ENCODE measurements at regions of chr12 and their contacts with region 1.

Region 1: GRCh38 chr12:10140001-10140400 is 10.0 kb upstream of the CLEC7A start:
- DNase-seq: peak; percentile 72
- H3K4me3 Mint-ChIP-seq: no peak overlapping the region
- H3K27ac Mint-ChIP-seq: no peak overlapping the region
- H3K4me1 Mint-ChIP-seq: no peaks in the 10 kb centered on the region
- H3K27me3 Mint-ChIP-seq: no peaks in the 10 kb centered on the region
- CTCF ChIP-seq: peak; percentile 69

Region 2: DNA sequence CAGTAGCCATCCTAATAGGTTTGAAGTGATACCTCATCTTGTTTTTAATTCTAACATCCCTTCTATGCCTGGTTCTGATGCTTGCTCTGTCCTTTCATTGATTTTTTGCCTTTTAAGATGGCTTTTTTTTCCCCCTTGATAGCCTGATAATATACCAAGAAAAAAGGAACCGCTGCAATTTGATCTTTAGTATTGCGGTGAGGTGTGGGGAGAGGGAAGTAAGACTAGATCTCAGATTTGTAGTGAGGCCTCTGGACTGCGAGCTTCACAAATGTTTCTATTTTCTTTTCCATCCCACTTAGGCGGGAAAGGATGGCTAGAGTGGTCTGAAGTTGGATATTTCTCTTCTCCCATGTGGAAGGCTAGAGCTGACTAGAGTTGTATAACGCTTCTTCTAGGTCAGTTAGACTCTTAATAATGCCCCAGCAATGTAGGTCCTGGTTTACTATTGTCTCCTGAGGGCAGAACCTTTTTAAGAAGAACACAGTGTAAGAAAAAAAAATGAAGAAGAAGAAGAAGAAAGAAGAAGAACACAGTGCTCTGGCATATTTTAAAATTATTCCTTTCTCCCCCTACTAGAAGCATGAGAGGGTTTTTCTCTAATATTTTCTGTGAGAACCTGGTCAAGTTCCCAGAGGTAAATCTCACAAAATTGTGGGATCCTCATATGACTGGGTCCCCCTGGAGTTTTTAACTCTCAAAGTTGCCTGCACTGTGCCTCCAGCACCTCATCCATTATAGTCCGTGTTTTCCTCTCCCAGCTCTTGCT is 520.4 kb before region 1 on chr12:
- CTCF ChIA-PET with region 1: no interaction called
- POLR2A ChIA-PET with region 1: no interaction called
- intact Hi-C with region 1: no loop called
- DNase-seq: no peak
- H3K4me3 Mint-ChIP-seq: no peak overlapping the region
- H3K27ac Mint-ChIP-seq: no peak overlapping the region
- H3K4me1 Mint-ChIP-seq: no peaks in the 10 kb centered on the region
- H3K27me3 Mint-ChIP-seq: no peaks in the 10 kb centered on the region
- CTCF ChIP-seq: no peak

Region 3: DNA sequence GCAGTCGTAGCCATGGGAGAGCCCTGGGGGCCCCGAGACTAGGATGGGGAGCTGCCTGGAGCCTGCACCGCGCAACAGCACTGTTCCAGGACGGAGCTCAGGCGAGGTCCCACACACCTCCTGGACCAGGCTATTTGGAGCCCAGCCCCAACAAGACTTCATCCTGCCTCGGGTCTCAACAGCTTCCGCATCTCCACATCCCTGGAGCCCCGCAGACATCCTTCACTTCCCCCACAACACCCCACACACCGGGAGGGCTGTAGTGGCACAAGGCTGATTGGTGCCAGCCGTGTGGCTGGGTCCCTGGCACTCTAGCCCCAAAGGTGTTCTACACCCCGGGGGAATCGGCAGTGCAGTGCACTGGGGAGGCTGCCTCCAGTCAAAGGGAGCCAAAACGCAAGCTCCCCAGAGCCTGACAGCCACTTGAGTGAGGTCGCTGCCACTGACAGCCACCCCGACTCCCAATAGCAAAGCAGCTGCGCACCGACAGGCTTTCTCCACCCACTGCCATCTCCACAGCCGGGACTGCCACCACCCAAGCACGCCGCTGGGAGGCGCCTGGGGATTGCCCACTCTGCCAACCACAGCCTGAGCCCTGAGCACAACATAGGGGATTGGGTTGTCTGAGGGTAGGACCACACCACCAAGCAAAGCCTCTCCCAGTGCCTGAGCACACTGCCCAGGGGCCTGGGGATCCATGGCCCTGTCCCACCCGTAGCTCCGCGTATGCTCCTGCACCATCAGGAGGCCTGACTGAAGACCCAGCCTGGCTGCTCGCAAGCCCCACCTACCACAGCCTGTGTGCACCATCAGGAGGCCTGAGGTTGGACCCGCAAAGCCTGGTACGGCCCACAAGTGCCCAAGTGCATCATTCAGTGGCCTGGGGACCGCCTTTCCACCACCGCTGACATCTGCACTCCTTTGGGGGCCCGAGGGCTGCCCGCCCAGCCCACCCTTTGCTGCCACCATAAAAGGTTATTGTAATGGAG is 325.9 kb before region 1 on chr12:
- CTCF ChIA-PET with region 1: interaction called, 7 read pairs
- POLR2A ChIA-PET with region 1: no interaction called
- intact Hi-C with region 1: loop called (anchors 1 kb)
- DNase-seq: peak; percentile 69
- H3K4me3 Mint-ChIP-seq: peak overlapping the region; percentile 57
- H3K27ac Mint-ChIP-seq: no peak overlapping the region
- H3K4me1 Mint-ChIP-seq: no peaks in the 10 kb centered on the region
- H3K27me3 Mint-ChIP-seq: no peaks in the 10 kb centered on the region
- CTCF ChIP-seq: peak; percentile 86

Region 4: GRCh38 chr12:10016881-10017280 is 123.1 kb before region 1 on chr12:
- CTCF ChIA-PET with region 1: interaction called, 74 read pairs
- POLR2A ChIA-PET with region 1: no interaction called
- intact Hi-C with region 1: no loop called
- DNase-seq: peak; percentile 37
- H3K4me3 Mint-ChIP-seq: no peak overlapping the region
- H3K27ac Mint-ChIP-seq: peak overlapping the region; percentile 2
- H3K4me1 Mint-ChIP-seq: peaks cover 8% of the 10 kb centered on the region
- H3K27me3 Mint-ChIP-seq: no peaks in the 10 kb centered on the region
- CTCF ChIP-seq: no peak

Region 5: GRCh38 chr12:10042167-10042566 is 97.8 kb before region 1 on chr12:
- CTCF ChIA-PET with region 1: interaction called, 134 read pairs
- POLR2A ChIA-PET with region 1: no interaction called
- intact Hi-C with region 1: no loop called
- DNase-seq: no peak
- H3K4me3 Mint-ChIP-seq: no peak overlapping the region
- H3K27ac Mint-ChIP-seq: no peak overlapping the region
- H3K4me1 Mint-ChIP-seq: no peaks in the 10 kb centered on the region
- H3K27me3 Mint-ChIP-seq: no peaks in the 10 kb centered on the region
- CTCF ChIP-seq: no peak

Region 6: GRCh38 chr12:10088031-10088430 is 52.0 kb before region 1 on chr12:
- CTCF ChIA-PET with region 1: no interaction called
- POLR2A ChIA-PET with region 1: no interaction called
- intact Hi-C with region 1: no loop called
- DNase-seq: no peak
- H3K4me3 Mint-ChIP-seq: no peak overlapping the region
- H3K27ac Mint-ChIP-seq: no peak overlapping the region
- H3K4me1 Mint-ChIP-seq: no peaks in the 10 kb centered on the region
- H3K27me3 Mint-ChIP-seq: no peaks in the 10 kb centered on the region
- CTCF ChIP-seq: no peak

Region 7: GRCh38 chr12:10190558-10191388 is 50.8 kb after region 1 on chr12:
- CTCF ChIA-PET with region 1: interaction called, 10 read pairs
- POLR2A ChIA-PET with region 1: interaction called, 3 read pairs
- intact Hi-C with region 1: no loop called
- DNase-seq: peak; percentile 80
- H3K4me3 Mint-ChIP-seq: no peak overlapping the region
- H3K27ac Mint-ChIP-seq: no peak overlapping the region
- H3K4me1 Mint-ChIP-seq: peaks cover 19% of the 10 kb centered on the region
- H3K27me3 Mint-ChIP-seq: no peaks in the 10 kb centered on the region
- CTCF ChIP-seq: peak; percentile 73

Region 8: GRCh38 chr12:10249690-10250455 is 109.9 kb after region 1 on chr12:
- CTCF ChIA-PET with region 1: no interaction called
- POLR2A ChIA-PET with region 1: no interaction called
- intact Hi-C with region 1: no loop called
- DNase-seq: no peak
- H3K4me3 Mint-ChIP-seq: no peak overlapping the region
- H3K27ac Mint-ChIP-seq: no peak overlapping the region
- H3K4me1 Mint-ChIP-seq: no peaks in the 10 kb centered on the region
- H3K27me3 Mint-ChIP-seq: no peaks in the 10 kb centered on the region
- CTCF ChIP-seq: no peak

Region 9: DNA sequence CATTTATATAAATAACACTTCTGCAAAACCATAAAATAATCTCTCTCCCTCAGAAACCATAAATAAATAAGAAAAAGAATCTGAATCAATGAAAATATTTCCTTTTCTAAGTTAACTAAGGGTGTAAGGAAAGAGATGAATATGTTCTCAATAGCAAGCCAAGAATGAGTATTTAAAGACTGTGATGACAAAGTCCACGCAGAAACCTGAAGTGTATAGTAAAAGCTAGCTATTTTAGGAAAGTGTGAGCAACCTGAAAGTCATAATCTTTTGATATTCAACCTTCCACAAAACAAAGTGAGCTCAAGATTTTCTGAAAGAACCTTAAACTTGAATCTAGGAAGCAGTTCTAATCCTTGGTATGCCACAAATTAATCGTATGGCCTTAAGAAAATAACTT is 381.6 kb after region 1 on chr12:
- CTCF ChIA-PET with region 1: no interaction called
- POLR2A ChIA-PET with region 1: no interaction called
- intact Hi-C with region 1: no loop called
- DNase-seq: no peak
- H3K4me3 Mint-ChIP-seq: no peak overlapping the region
- H3K27ac Mint-ChIP-seq: no peak overlapping the region
- H3K4me1 Mint-ChIP-seq: no peaks in the 10 kb centered on the region
- H3K27me3 Mint-ChIP-seq: no peaks in the 10 kb centered on the region
- CTCF ChIP-seq: no peak